MCF 10A (cell line): ENCODE measurements at regions of chr3 and their contacts with region 1.

Region 1: GRCh38 chr3:13884851-13885703 is 5.2 kb upstream of the WNT7A start:
- DNase-seq: peak; percentile 75
- H3K4me3 Mint-ChIP-seq: no peak overlapping the region
- H3K27ac Mint-ChIP-seq: no peak overlapping the region
- H3K4me1 Mint-ChIP-seq: peaks cover 1% of the 10 kb centered on the region
- H3K27me3 Mint-ChIP-seq: peaks cover 34% of the 10 kb centered on the region
- CTCF ChIP-seq: peak; percentile 82

Region 2: GRCh38 chr3:13009132-13009960 is 875.7 kb before region 1 on chr3:
- CTCF ChIA-PET with region 1: no interaction called
- POLR2A ChIA-PET with region 1: no interaction called
- intact Hi-C with region 1: no loop called
- DNase-seq: no peak
- H3K4me3 Mint-ChIP-seq: no peak overlapping the region
- H3K27ac Mint-ChIP-seq: no peak overlapping the region
- H3K4me1 Mint-ChIP-seq: no peaks in the 10 kb centered on the region
- H3K27me3 Mint-ChIP-seq: peaks cover 1% of the 10 kb centered on the region
- CTCF ChIP-seq: no peak

Region 3: GRCh38 chr3:13495921-13496723 is 389.0 kb before region 1 on chr3:
- CTCF ChIA-PET with region 1: interaction called, 4 read pairs
- POLR2A ChIA-PET with region 1: no interaction called
- intact Hi-C with region 1: loop called (anchors 5 kb)
- DNase-seq: peak; percentile 80
- H3K4me3 Mint-ChIP-seq: no peak overlapping the region
- H3K27ac Mint-ChIP-seq: peak overlapping the region; percentile 19
- H3K4me1 Mint-ChIP-seq: peaks cover 14% of the 10 kb centered on the region
- H3K27me3 Mint-ChIP-seq: no peaks in the 10 kb centered on the region
- CTCF ChIP-seq: peak; percentile 96

Region 4: DNA sequence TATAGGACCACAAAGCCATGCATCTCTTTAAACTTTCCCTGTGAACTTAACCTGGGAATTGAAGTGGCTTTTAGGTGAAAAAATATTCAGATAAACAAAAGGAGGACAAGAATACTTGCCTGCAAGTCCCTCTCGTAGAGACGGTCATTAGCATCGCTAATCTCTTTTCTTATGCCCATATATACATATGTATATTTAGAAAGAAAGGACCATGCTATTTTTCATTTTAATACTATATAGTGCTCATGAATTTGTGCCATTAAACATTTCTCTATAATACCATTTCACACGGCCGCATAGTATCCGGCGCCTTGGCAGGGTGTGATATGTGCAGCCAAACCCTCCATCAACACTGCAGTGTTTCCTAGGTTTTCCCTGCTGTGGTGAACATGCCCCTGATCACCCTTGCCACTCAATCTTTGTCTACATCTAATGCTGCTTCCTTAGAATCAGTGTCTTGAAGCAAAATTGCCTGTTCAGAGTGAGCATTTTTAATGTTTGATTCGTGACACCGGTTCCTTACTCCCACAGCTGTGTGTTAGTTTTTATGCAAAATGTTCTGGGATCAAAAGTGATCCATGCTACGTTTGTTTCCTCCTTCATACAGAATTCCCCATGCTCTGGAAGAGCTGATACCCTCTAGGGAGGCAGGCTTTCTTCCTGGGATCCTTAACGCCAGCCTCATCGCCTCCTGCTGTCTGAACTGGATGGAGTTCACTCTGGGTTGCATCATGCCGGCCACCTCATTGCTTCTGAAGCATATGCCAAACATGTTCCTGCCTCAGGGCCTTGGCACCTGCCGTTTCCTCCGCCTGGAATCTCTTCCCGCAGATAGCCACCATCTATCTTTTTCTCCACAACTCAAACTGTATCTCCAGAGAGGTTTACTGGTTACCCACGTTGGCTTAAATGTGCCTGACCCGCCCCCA is 218.0 kb before region 1 on chr3:
- CTCF ChIA-PET with region 1: interaction called, 597 read pairs
- POLR2A ChIA-PET with region 1: interaction called, 3 read pairs
- intact Hi-C with region 1: no loop called
- DNase-seq: peak; percentile 69
- H3K4me3 Mint-ChIP-seq: no peak overlapping the region
- H3K27ac Mint-ChIP-seq: no peak overlapping the region
- H3K4me1 Mint-ChIP-seq: peaks cover 5% of the 10 kb centered on the region
- H3K27me3 Mint-ChIP-seq: no peaks in the 10 kb centered on the region
- CTCF ChIP-seq: no peak

Region 5: GRCh38 chr3:13824521-13825310 is 60.4 kb before region 1 on chr3:
- CTCF ChIA-PET with region 1: interaction called, 16 read pairs
- POLR2A ChIA-PET with region 1: no interaction called
- intact Hi-C with region 1: no loop called
- DNase-seq: peak; percentile 13
- H3K4me3 Mint-ChIP-seq: no peak overlapping the region
- H3K27ac Mint-ChIP-seq: peak overlapping the region; percentile 40
- H3K4me1 Mint-ChIP-seq: peaks cover 38% of the 10 kb centered on the region
- H3K27me3 Mint-ChIP-seq: no peaks in the 10 kb centered on the region
- CTCF ChIP-seq: no peak

Region 6: GRCh38 chr3:13901935-13902584 is 17.0 kb after region 1 on chr3:
- CTCF ChIA-PET with region 1: interaction called, 12 read pairs
- POLR2A ChIA-PET with region 1: interaction called, 4 read pairs
- intact Hi-C with region 1: no loop called
- DNase-seq: no peak
- H3K4me3 Mint-ChIP-seq: no peak overlapping the region
- H3K27ac Mint-ChIP-seq: no peak overlapping the region
- H3K4me1 Mint-ChIP-seq: no peaks in the 10 kb centered on the region
- H3K27me3 Mint-ChIP-seq: no peaks in the 10 kb centered on the region
- CTCF ChIP-seq: no peak